ENCODE measurements at regions of chr1 and their contacts with region 1.

Region 1: GRCh38 chr1:111222308-111223125 is 5.0 kb upstream of the CHI3L2 start:
- DNase-seq: peak; percentile 66
- CTCF ChIP-seq: peak; percentile 89

Region 2: GRCh38 chr1:110696818-110697217 is 525.7 kb before region 1 on chr1:
- in situ Hi-C with region 1: no loop called
- DNase-seq: no peak
- CTCF ChIP-seq: no peak

Region 3: DNA sequence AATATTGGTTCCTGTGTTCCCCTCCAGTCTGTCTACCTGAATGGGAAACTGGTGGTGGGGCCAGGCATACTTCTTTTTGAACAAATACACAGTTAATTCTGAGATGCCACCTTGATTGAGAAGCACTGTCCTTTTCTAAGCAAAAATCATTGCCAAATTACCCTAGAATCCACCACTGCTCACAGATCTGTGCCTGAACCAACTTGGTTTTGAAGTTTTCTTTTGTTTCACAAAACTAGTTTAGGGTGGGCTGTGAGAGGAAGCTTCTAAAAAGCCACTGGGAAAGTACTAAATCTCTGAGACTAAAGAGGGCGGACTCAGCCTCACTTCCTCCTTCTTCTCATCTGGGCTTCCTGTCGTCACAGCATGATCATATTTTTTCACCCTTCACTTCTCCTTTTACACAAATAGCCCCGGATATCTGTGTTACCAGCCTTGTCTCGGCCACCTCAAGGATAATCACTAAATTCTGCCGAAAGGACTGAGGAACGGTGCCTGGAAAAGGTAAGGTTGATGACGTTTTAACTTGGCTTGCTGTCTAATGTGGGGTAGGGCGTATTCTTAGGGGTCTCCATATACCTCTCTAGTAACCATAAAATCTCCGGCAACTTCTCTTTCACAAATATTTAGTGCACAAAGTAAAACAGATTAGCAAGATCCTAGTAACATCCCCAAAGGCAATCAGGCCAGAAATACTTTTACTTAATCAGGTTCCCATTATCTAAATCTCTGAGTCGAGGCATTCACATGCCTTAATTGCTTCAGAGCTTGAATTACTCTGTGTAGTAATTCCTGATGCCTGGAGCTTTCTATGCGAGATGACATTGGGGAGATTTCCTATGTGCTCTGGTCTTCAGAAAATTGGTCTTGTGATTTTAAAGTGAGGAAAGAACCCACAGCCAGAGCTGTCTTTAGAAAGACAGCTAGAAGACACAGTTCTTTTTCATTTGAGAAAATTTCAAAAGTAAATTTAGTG is 349.5 kb before region 1 on chr1 and contains the start of gene CD53:
- in situ Hi-C with region 1: loop called (anchors 10 kb)
- DNase-seq: peak; percentile 40
- CTCF ChIP-seq: no peak

Region 4: DNA sequence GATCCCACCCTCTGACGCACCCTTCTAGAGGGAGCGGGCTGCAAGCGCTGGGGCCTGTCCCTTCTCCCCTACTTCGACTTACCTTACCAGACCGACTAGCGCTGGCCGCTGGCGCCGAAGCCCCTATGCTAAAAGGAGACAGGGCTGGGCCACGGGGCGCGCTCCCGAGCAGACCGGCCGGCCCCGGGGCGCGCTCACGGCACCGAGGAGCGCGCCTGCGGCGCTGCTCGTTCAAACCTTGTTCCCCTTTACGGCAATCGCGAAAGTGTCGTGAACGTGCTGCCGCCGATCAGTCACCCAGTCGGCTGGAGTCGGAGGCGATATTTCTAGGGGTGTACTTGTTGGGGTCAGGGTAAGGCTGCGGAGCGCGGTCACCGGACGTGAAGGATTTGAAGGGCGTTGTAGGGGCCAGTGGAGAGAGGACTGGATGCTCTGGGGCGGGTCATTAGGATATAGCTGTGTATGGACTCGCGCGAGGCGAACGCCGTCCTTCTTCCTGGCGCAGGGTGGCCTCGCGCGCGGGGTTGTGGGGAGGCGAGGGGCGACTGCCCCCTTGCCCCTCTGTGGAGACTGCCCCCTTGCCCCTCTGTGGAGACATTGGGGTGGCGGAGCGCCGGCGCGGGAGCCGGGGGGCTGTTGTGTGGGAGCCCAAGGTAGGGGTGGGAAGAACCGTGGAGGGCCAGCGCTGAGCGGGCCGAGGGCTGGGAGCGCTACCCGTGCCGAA is 82.4 kb before region 1 on chr1 and contains the starts of genes CEPT1 and DRAM2:
- in situ Hi-C with region 1: loop called (anchors 5 kb)
- DNase-seq: peak; percentile 93
- CTCF ChIP-seq: no peak

Region 5: GRCh38 chr1:111151838-111152237 is 70.7 kb before region 1 on chr1:
- in situ Hi-C with region 1: no loop called
- DNase-seq: no peak
- CTCF ChIP-seq: no peak

Region 6: DNA sequence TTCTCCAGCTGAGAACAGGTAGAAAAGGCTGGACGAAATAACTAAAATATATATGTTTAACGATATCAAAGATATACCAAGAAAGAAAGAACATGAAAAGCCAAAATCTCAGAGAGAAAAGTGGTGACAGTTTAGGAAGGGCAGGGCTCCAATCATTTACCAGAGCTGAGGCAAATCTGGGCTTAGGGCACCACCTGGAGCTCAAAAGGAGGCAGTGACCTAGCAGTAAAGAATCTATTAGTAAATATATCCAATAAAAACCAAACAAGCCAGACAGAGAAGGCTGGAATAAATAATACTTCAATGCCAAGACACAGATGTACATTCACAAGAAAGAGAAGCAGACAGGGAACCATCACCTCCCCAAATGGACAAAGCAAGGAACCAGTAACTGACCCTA is 111.7 kb after region 1 on chr1:
- in situ Hi-C with region 1: loop called (anchors 10 kb)
- DNase-seq: peak; percentile 67
- CTCF ChIP-seq: peak; percentile 43

Region 7: GRCh38 chr1:111399792-111400610 is 177.5 kb after region 1 on chr1:
- in situ Hi-C with region 1: loop called (anchors 10 kb)
- DNase-seq: peak; percentile 37
- CTCF ChIP-seq: peak; percentile 28

Region 8: DNA sequence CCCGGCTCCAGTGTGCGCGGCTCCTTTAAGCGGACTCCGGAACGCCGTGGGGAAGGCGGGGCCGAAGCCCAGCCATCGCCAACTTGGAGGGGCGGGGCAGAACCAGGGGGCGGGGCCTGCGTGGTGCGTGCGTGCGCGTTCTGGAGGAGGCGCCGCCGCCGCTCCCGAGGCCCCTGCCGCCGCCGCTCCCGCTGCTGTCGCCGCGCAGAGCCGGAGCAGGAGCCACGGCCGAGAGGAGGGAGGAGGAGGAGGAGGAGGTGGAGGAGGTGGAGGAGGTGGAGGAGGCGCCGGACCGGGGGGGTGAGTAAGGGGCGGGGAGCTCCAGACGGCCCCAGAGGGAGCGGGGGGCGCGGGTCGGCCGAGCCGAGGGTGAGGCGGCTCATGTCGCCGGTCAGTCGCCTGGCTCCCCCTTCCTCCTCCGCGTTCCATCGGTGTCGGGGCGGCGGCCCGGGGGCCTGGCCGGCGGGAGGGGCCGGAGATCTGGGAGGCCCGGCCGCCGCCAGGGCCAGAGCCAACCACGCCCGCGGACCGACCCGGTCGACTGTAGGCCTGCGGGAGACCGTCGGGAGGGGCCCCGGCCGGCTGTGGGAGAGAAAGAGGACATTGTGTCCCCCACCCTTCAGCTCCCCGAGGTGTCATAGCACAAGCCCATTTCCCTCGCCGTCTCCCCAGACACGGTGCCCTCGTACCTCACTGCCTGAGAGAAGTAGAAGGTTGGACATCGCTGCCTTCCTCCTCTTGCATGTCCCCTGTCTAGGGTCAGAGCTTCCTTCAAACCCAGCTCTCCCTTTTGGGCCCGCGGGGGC is 397.3 kb after region 1 on chr1 and contains the start of gene RAP1A:
- in situ Hi-C with region 1: loop called (anchors 25 kb)
- DNase-seq: peak; percentile 94
- CTCF ChIP-seq: no peak